ENCODE measurements at regions of chr14 and their contacts with region 1.

Region 1: GRCh38 chr14:105267820-105268548 is 19.7 kb downstream of the BTBD6 start:
- DNase-seq: no peak
- H3K4me3 ChIP-seq: no peak overlapping the region
- H3K27ac ChIP-seq: no peak overlapping the region
- H3K4me1 ChIP-seq: no peaks in the 10 kb centered on the region
- H3K27me3 ChIP-seq: no peaks in the 10 kb centered on the region
- CTCF ChIP-seq: no peak
- EP300 ChIP-seq: no peak
- POLR2A ChIP-seq: no peak

Region 2: GRCh38 chr14:105075379-105076295 is 192.3 kb before region 1 on chr14:
- intact Hi-C with region 1: no loop called
- DNase-seq: peak in 1 of 5 donors; percentile 54
- H3K4me3 ChIP-seq: no peak overlapping the region
- H3K27ac ChIP-seq: no peak overlapping the region
- H3K4me1 ChIP-seq: no peaks in the 10 kb centered on the region
- H3K27me3 ChIP-seq: no peaks in the 10 kb centered on the region
- CTCF ChIP-seq: no peak
- EP300 ChIP-seq: no peak
- POLR2A ChIP-seq: no peak

Region 3: DNA sequence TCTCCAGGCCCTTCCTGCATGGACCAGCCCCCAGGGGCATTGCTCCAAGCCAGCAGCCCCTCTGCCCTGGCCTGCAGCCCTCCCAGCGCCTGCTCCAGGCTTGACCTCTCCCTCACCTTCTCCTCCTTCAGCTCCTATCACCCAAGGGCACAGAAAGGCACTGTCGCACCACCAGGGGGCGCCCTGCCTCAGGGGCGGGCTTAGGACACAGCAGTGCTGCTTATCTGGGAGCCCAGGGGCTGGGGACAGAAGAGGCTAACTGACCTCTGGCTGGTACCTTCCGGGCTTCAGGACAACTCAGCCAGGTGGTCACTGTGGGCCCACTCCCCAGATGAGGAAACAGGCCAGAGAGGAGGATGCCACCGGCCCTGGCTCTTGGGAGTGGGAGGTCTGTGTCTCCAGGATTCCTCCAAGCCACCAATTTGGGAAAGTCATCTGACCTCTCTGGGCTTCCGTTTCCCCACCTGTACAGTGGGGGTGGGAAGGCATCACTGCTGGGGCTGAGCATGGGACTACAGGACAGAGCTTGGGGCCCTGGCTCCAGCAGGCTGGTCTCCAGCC is 177.4 kb before region 1 on chr14:
- intact Hi-C with region 1: loop called in 1 of 4 experiments (anchors 10 kb)
- DNase-seq: peak; percentile 55 to 83 (median 74)
- H3K4me3 ChIP-seq: no peak overlapping the region
- H3K27ac ChIP-seq: no peak overlapping the region
- H3K4me1 ChIP-seq: peaks cover 15% of the 10 kb centered on the region
- H3K27me3 ChIP-seq: no peaks in the 10 kb centered on the region
- CTCF ChIP-seq: peak; percentile 31 to 68 (median 48)
- EP300 ChIP-seq: no peak
- POLR2A ChIP-seq: no peak

Region 4: GRCh38 chr14:105138021-105138541 is 129.9 kb before region 1 on chr14:
- intact Hi-C with region 1: no loop called
- DNase-seq: no peak
- H3K4me3 ChIP-seq: no peak overlapping the region
- H3K27ac ChIP-seq: no peak overlapping the region
- H3K4me1 ChIP-seq: no peaks in the 10 kb centered on the region
- H3K27me3 ChIP-seq: no peaks in the 10 kb centered on the region
- CTCF ChIP-seq: no peak
- EP300 ChIP-seq: no peak
- POLR2A ChIP-seq: no peak

Measured in ovary (tissue), 10 donors.